ENCODE measurements at regions of chr19 and their contacts with region 1.

Region 1: GRCh38 chr19:46021531-46022041 is 1.3 kb downstream of the PGLYRP1 start:
- DNase-seq: no peak
- ATAC-seq: peak in 2 of 4 donors; percentile 11 to 38
- H3K4me3 ChIP-seq: no peak overlapping the region
- H3K27ac ChIP-seq: no peak overlapping the region
- H3K4me1 ChIP-seq: no peaks in the 10 kb centered on the region
- H3K27me3 ChIP-seq: peaks cover 0 to 14% (median 2%) of the 10 kb centered on the region in 4 donors
- CTCF ChIP-seq: no peak

Region 2: DNA sequence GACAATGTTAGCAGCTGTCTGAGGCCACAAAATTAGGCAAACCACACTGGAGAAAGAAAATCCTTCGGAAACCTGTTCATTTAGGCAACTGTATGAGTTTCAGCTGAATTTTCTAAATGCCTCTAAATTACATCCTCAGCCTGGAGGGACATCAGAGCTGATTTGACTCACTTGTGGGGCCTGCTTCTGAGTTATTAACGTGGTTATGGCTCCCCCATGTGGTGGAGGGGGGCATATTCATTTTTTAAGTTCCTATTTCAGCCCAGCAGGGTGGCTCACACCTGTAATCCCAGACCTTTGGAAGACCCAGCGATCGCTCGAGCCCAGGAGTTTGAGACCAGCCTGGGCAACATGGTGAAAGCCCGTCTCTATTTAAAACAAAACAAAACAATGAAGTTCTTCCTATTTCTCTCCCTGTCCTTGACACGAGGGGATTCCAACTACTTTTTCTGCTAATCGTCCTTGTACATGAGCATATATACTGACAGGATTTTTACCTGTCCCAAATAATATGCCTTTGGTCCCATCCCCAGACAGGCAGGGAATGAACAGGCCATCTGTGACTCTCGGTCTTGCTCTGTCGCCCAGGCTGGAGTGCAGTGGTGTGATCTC is 243.7 kb after region 1 on chr19:
- intact Hi-C with region 1: loop called in 1 of 3 experiments (anchors 10 kb)
- DNase-seq: peak in 4 of 6 donors; percentile 42 to 77 (median 46)
- ATAC-seq: peak; percentile 82 to 98 (median 95)
- H3K4me3 ChIP-seq: no peak overlapping the region
- H3K27ac ChIP-seq: no peak overlapping the region
- H3K4me1 ChIP-seq: no peaks in the 10 kb centered on the region
- H3K27me3 ChIP-seq: peaks cover 0 to 4% (median 0%) of the 10 kb centered on the region in 4 donors
- CTCF ChIP-seq: peak; percentile 73 to 90 (median 76)

Measured in pancreas (tissue), 10 donors.